CD4-positive, alpha-beta memory T cell (primary cell): ENCODE measurements at regions of chr16 and their contacts with region 1.

Region 1: GRCh38 chr16:14285513-14286385 is 214.6 kb downstream of the MRTFB start:
- DNase-seq: peak; percentile 91 to 98 (median 95)
- H3K4me3 ChIP-seq: peak overlapping the region; percentile 64 to 71
- H3K4me3 Mint-ChIP-seq: peak overlapping the region; percentile 89 to 97 (median 95)
- H3K27ac ChIP-seq: peak overlapping the region; percentile 71
- H3K27ac Mint-ChIP-seq: peak overlapping the region; percentile 87 to 98 (median 94)
- H3K4me1 ChIP-seq: peaks cover 18% of the 10 kb centered on the region
- H3K4me1 Mint-ChIP-seq: peaks cover 8 to 33% (median 16%) of the 10 kb centered on the region in 4 donors
- H3K27me3 ChIP-seq: no peaks in the 10 kb centered on the region
- H3K27me3 Mint-ChIP-seq: peaks cover 2% of the 10 kb centered on the region in 2 donors

Region 2: DNA sequence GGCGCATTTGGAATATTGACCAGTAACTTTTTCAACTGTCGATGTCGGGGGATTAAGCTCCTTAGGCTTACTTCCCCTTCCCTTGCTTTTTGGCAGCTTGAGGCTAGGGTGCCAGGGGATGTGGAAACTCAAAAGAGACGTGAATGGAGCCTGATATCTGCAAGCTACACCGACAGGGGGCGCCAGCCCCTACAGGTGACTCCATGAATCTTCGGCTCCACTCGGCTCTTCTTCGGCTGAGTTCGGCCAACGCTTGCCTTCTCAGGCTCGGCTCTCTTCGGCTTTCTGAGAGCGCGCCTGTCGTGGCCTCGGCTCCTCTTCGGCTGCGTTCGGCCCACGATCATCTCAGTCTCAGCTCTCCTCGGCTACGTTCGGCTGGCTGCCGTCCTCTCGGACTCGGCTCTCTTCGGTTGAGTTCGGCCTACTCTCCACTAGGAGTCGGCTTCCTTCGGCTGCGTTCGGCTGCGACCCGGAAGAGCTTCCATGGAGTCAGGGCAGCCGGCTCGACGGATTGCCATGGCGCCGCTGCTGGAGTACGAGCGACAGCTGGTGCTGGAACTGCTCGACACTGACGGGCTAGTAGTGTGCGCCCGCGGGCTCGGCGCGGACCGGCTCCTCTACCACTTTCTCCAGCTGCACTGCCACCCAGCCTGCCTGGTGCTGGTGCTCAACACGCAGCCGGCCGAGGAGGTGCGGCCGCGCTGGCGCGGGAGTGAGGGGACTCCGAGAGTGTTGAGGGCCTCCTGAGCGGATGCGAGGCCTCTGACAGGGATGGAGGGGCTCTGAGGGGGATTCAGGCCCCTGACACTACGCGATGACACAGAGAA is 365.9 kb before region 1 on chr16 and contains the start of gene ERCC4:
- CTCF ChIA-PET with region 1: interaction called, 11 read pairs
- POLR2A ChIA-PET with region 1: interaction called, 8 read pairs
- intact Hi-C with region 1: loop called (anchors 1 kb)
- DNase-seq: peak; percentile 99 to 100 (median 100)
- H3K4me3 ChIP-seq: peak within 1 kb of the TSS; percentile 87 to 90
- H3K4me3 Mint-ChIP-seq: peak within 1 kb of the TSS; percentile 83 to 94 (median 90)
- H3K27ac ChIP-seq: peak within 1 kb of the TSS; percentile 90
- H3K27ac Mint-ChIP-seq: peak within 1 kb of the TSS; percentile 70 to 96 (median 91)
- H3K4me1 ChIP-seq: peaks cover 16% of the 10 kb centered on the region
- H3K4me1 Mint-ChIP-seq: peaks cover 15 to 29% (median 22%) of the 10 kb centered on the region in 4 donors
- H3K27me3 ChIP-seq: no peaks in the 10 kb centered on the region
- H3K27me3 Mint-ChIP-seq: no peaks in the 10 kb centered on the region
- total RNA-seq, gene ERCC4: 11.5 to 15.3 TPM

Region 3: GRCh38 chr16:14070877-14071575 is 214.7 kb before region 1 on chr16 and contains the start of gene MRTFB:
- CTCF ChIA-PET with region 1: no interaction called
- POLR2A ChIA-PET with region 1: no interaction called
- intact Hi-C with region 1: loop called (anchors 5 kb)
- DNase-seq: peak; percentile 74 to 88 (median 84)
- H3K4me3 ChIP-seq: peak within 1 kb of the TSS; percentile 59 to 84
- H3K4me3 Mint-ChIP-seq: peak within 1 kb of the TSS; percentile 88 to 92 (median 89)
- H3K27ac ChIP-seq: peak within 1 kb of the TSS; percentile 69
- H3K27ac Mint-ChIP-seq: peak within 1 kb of the TSS; percentile 81 to 91 (median 88)
- H3K4me1 ChIP-seq: peaks cover 13% of the 10 kb centered on the region
- H3K4me1 Mint-ChIP-seq: peaks cover 8 to 24% (median 17%) of the 10 kb centered on the region in 4 donors
- H3K27me3 ChIP-seq: no peaks in the 10 kb centered on the region
- H3K27me3 Mint-ChIP-seq: peaks cover 0 to 4% of the 10 kb centered on the region in 2 donors
- total RNA-seq, gene MRTFB: 24.7 to 26.7 TPM

Region 4: GRCh38 chr16:14249291-14250032 is 36.3 kb before region 1 on chr16:
- CTCF ChIA-PET with region 1: interaction called, 13 read pairs
- POLR2A ChIA-PET with region 1: no interaction called
- intact Hi-C with region 1: loop called (anchors 1 kb)
- DNase-seq: peak in 4 of 5 donors; percentile 45 to 51 (median 48)
- H3K4me3 ChIP-seq: no peak overlapping the region
- H3K4me3 Mint-ChIP-seq: no peak overlapping the region
- H3K27ac ChIP-seq: no peak overlapping the region
- H3K27ac Mint-ChIP-seq: peak overlapping the region in 1 of 7 donors; percentile 2
- H3K4me1 ChIP-seq: no peaks in the 10 kb centered on the region
- H3K4me1 Mint-ChIP-seq: no peaks in the 10 kb centered on the region
- H3K27me3 ChIP-seq: no peaks in the 10 kb centered on the region
- H3K27me3 Mint-ChIP-seq: no peaks in the 10 kb centered on the region

Region 5: DNA sequence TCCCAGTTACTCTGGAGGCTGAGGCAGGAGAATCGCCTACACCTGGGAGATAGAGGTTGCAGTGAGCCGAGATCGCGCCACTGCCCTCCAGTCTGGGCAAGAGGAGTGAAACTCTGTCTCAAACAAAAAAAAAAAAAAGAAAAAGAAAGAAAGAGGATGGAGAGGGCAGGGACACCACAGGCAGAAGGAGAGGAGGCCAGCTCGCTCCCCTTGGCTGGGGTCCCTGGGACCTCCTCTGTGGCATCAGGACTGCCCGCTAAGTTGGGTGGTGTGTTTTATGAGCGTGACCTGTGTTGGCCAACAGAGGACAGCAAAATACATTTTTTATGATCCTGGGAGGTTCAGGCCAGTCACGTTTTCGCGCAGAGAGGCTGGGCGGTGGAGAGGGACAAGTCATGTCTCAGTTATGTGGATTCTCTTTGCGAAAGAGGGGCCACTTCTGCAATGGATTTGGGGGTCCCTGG is 15.0 kb after region 1 on chr16:
- CTCF ChIA-PET with region 1: interaction called, 3 read pairs
- POLR2A ChIA-PET with region 1: interaction called, 8 read pairs
- intact Hi-C with region 1: loop called (anchors 1 kb)
- DNase-seq: peak in 2 of 5 donors; percentile 18 to 25
- H3K4me3 ChIP-seq: no peak overlapping the region
- H3K4me3 Mint-ChIP-seq: peak overlapping the region; percentile 79 to 90 (median 84)
- H3K27ac ChIP-seq: no peak overlapping the region
- H3K27ac Mint-ChIP-seq: peak overlapping the region in 4 of 7 donors; percentile 19 to 84 (median 51)
- H3K4me1 ChIP-seq: peaks cover 17% of the 10 kb centered on the region
- H3K4me1 Mint-ChIP-seq: peaks cover 5 to 19% (median 9%) of the 10 kb centered on the region in 4 donors
- H3K27me3 ChIP-seq: peaks cover 10% of the 10 kb centered on the region
- H3K27me3 Mint-ChIP-seq: peaks cover 3 to 8% of the 10 kb centered on the region in 2 donors

Region 6: DNA sequence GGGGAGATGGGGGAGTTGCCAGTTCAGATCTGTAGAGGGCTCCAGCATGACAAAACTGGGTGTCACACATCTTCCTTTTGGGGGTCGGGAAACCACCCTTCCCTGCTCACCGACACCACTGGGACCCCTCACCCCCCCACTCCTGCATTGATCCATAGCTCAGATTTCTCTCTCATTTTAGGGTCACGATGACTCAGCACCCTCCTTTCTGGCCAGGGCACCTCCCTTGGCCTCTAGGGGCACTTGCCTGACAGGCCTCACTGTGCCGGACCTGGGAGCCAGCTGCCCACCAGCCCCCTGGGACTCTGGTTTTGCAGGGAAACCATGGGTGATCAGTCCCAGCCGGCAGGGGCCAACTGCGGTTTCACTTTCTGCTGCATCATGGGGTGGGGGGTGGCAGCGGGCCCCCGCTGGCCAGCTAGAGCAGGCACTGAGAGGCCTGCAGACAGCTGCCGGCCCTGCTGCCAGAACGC is 24.8 kb after region 1 on chr16:
- CTCF ChIA-PET with region 1: interaction called, 3 read pairs
- POLR2A ChIA-PET with region 1: interaction called, 18 read pairs
- intact Hi-C with region 1: no loop called
- DNase-seq: no peak
- H3K4me3 ChIP-seq: no peak overlapping the region
- H3K4me3 Mint-ChIP-seq: no peak overlapping the region
- H3K27ac ChIP-seq: no peak overlapping the region
- H3K27ac Mint-ChIP-seq: no peak overlapping the region
- H3K4me1 ChIP-seq: peaks cover 11% of the 10 kb centered on the region
- H3K4me1 Mint-ChIP-seq: peaks cover 8 to 20% (median 11%) of the 10 kb centered on the region in 4 donors
- H3K27me3 ChIP-seq: no peaks in the 10 kb centered on the region
- H3K27me3 Mint-ChIP-seq: no peaks in the 10 kb centered on the region

Region 7: GRCh38 chr16:14369730-14370624 is 84.2 kb after region 1 on chr16:
- CTCF ChIA-PET with region 1: no interaction called
- POLR2A ChIA-PET with region 1: no interaction called
- intact Hi-C with region 1: no loop called
- DNase-seq: no peak
- H3K4me3 ChIP-seq: no peak overlapping the region
- H3K4me3 Mint-ChIP-seq: no peak overlapping the region
- H3K27ac ChIP-seq: no peak overlapping the region
- H3K27ac Mint-ChIP-seq: no peak overlapping the region
- H3K4me1 ChIP-seq: no peaks in the 10 kb centered on the region
- H3K4me1 Mint-ChIP-seq: peaks cover 0 to 1% (median 0%) of the 10 kb centered on the region in 4 donors
- H3K27me3 ChIP-seq: no peaks in the 10 kb centered on the region
- H3K27me3 Mint-ChIP-seq: no peaks in the 10 kb centered on the region

Region 8: GRCh38 chr16:14418795-14419225 is 133.1 kb after region 1 on chr16:
- CTCF ChIA-PET with region 1: no interaction called
- POLR2A ChIA-PET with region 1: no interaction called
- intact Hi-C with region 1: no loop called
- DNase-seq: no peak
- H3K4me3 ChIP-seq: no peak overlapping the region
- H3K4me3 Mint-ChIP-seq: no peak overlapping the region
- H3K27ac ChIP-seq: no peak overlapping the region
- H3K27ac Mint-ChIP-seq: peak overlapping the region in 2 of 7 donors; percentile 43 to 72
- H3K4me1 ChIP-seq: no peaks in the 10 kb centered on the region
- H3K4me1 Mint-ChIP-seq: no peaks in the 10 kb centered on the region
- H3K27me3 ChIP-seq: no peaks in the 10 kb centered on the region
- H3K27me3 Mint-ChIP-seq: no peaks in the 10 kb centered on the region

Region 9: DNA sequence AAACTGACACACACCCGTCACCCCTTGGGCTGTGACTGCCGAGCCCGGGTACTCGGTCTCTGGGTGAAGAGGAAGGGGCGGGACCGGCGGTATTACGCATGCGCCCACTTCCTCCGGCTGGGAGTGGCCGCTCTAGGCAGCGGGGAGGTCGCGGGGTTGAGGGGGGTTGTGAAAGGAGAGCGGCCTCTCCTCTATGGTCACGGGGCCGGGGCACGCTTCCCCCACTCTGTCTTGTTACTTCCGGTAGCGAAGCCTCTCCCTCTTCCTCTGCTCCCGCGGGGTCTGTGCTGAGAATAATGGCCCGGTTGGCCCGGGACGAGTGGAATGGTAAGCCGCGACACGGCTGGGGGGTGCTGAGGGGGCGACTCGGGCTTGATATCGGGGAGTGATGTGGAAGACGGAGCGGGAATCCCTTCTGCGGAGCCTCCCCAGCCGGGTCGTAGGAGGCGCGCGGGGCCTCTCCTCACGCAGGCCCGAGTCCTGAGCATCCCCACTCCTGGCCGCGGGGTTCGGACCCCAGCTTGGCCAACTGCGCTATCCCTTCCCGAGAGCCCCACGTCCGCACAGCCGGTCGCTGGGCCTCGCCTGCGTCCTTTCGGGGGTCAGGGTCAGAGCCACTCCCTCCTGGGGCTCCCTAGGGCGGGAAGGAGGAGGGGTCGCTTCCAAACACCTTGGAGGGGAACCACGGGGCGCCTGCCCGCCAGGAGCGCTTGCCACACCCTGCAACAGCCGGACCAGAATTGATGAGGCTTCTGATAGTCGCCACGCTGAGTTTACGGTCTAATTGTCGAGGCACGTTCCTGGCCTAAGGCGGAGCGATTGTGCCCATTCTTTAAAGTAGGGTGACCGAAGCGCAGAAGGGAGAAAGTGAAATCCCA is 347.2 kb after region 1 on chr16 and contains the start of gene BFAR:
- CTCF ChIA-PET with region 1: no interaction called
- POLR2A ChIA-PET with region 1: interaction called, 8 read pairs
- intact Hi-C with region 1: loop called (anchors 1 kb)
- DNase-seq: peak; percentile 99
- H3K4me3 ChIP-seq: peak within 1 kb of the TSS; percentile 85 to 93
- H3K4me3 Mint-ChIP-seq: peak within 1 kb of the TSS; percentile 99 to 100 (median 100)
- H3K27ac ChIP-seq: peak within 1 kb of the TSS; percentile 83
- H3K27ac Mint-ChIP-seq: peak within 1 kb of the TSS; percentile 87 to 100 (median 99)
- H3K4me1 ChIP-seq: peaks cover 63% of the 10 kb centered on the region
- H3K4me1 Mint-ChIP-seq: peaks cover 37 to 79% (median 62%) of the 10 kb centered on the region in 4 donors
- H3K27me3 ChIP-seq: no peaks in the 10 kb centered on the region
- H3K27me3 Mint-ChIP-seq: no peaks in the 10 kb centered on the region
- total RNA-seq, gene BFAR: 71.9 to 79.6 TPM